ENCODE measurements at regions of chr4 and their contacts with region 1.

Region 1: DNA sequence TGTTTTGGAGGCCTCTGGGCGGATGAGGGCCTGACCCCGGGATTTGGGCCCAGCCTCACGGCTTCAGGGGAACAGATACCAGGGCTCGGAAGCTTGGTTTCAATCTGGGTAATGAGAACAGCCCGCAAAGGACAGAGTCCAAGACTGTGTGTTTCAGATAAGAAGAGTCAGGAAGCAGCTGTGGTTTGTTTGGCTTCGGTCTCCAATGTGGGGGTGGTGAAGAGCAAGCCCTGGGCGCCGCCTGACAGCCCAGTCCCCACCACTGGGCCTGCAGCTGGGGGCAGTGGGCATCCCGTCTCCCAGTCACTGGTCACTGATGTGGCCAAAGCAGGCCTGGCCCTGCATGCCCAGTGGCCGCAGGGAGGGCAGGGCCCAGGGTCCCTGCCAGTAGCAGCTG is 9.1 kb downstream of the WFS1 start:
- DNase-seq: peak in 1 of 9 experiments; percentile 20
- ATAC-seq: no peak
- H3K4me3 ChIP-seq: no peak overlapping the region
- H3K4me3 Mint-ChIP-seq: no peak overlapping the region
- H3K27ac ChIP-seq: no peak overlapping the region
- H3K27ac Mint-ChIP-seq: no peak overlapping the region
- H3K4me1 ChIP-seq: peaks cover 13% of the 10 kb centered on the region
- H3K4me1 Mint-ChIP-seq: peaks cover 9% of the 10 kb centered on the region
- H3K27me3 ChIP-seq: no peaks in the 10 kb centered on the region
- H3K27me3 Mint-ChIP-seq: no peaks in the 10 kb centered on the region
- CTCF ChIP-seq: no peak

Region 2: DNA sequence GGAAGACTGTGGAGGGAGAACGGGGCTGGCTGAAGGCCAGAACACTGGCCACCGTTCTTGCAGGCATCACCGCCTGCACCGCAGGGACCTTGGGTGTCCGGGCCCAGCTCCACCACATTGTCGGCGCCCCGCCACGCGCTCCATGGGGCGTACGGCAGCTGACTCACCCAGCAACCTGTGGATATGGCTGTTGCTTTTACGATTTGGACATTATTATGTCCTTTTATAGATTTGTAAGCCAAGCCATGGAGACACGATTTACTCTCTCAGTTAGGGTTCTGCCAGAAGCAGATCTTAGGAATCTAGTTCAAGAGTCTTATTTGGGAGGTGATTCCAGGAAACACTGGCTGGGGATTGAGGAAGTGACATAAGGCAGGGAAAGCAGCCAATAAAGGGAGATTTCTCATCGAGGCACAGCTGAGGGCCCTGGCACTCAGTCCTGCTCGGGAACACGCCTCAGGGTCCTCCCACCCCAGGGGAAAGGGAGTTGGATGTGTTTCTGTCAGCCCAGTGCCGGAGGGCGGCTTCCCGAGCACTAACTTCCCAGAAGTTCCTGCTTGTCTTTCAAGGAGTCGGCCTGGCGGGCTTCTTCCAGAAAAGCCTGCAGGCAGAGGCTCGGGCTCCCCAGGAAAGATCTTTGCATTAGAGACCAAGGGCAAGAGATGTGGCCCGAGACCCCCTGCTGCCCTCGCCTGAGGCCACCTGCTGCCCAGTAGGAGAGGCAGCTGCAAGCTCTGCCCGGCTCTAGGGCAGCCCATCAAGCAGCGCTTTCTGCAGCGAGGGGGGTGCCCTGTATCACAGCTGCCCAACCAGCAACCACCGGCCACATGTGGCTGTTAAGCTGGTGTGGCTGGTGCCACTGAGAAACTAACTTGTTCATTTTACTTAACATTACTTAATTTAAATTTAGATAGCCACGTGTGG is 438.8 kb before region 1 on chr4:
- CTCF ChIA-PET with region 1: no interaction called
- POLR2A ChIA-PET with region 1: no interaction called
- intact Hi-C with region 1: no loop called
- DNase-seq: no peak
- ATAC-seq: no peak
- H3K4me3 ChIP-seq: no peak overlapping the region
- H3K4me3 Mint-ChIP-seq: no peak overlapping the region
- H3K27ac ChIP-seq: no peak overlapping the region
- H3K27ac Mint-ChIP-seq: no peak overlapping the region
- H3K4me1 ChIP-seq: no peaks in the 10 kb centered on the region
- H3K4me1 Mint-ChIP-seq: no peaks in the 10 kb centered on the region
- H3K27me3 ChIP-seq: no peaks in the 10 kb centered on the region
- H3K27me3 Mint-ChIP-seq: peaks cover 6% of the 10 kb centered on the region
- CTCF ChIP-seq: no peak

Region 3: DNA sequence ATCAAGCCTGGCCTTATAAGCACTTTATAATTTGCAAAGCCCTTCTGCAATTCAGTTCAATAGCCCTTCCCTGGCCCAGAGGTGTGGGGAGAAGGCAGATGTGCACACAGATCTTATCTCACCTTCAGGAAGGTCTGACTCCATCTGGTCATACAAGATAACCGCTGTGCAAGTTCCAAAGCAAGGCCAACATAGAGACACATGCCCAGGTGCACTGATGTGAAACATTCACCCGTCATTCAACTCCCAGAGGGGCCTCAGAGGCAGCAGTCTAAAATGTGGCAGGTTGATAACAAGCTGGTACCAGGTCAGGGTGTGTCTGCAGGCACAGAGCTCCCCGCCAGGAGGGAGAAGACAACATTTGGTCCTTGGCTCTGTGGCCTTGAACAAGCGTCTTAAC is 20.1 kb before region 1 on chr4:
- CTCF ChIA-PET with region 1: interaction called, 3 read pairs
- POLR2A ChIA-PET with region 1: no interaction called
- intact Hi-C with region 1: loop called in 1 of 2 experiments (anchors 2 kb)
- DNase-seq: no peak
- ATAC-seq: no peak
- H3K4me3 ChIP-seq: no peak overlapping the region
- H3K4me3 Mint-ChIP-seq: no peak overlapping the region
- H3K27ac ChIP-seq: no peak overlapping the region
- H3K27ac Mint-ChIP-seq: no peak overlapping the region
- H3K4me1 ChIP-seq: no peaks in the 10 kb centered on the region
- H3K4me1 Mint-ChIP-seq: peaks cover 6% of the 10 kb centered on the region
- H3K27me3 ChIP-seq: no peaks in the 10 kb centered on the region
- H3K27me3 Mint-ChIP-seq: peaks cover 40% of the 10 kb centered on the region
- CTCF ChIP-seq: no peak

Region 4: GRCh38 chr4:6308899-6309643 is 30.3 kb after region 1 on chr4:
- CTCF ChIA-PET with region 1: no interaction called
- POLR2A ChIA-PET with region 1: no interaction called
- intact Hi-C with region 1: no loop called
- DNase-seq: peak in 5 of 9 experiments; percentile 26 to 64 (median 52)
- ATAC-seq: peak; percentile 70
- H3K4me3 ChIP-seq: peak overlapping the region in 1 of 2 experiments; percentile 52
- H3K4me3 Mint-ChIP-seq: peak overlapping the region; percentile 78
- H3K27ac ChIP-seq: no peak overlapping the region
- H3K27ac Mint-ChIP-seq: no peak overlapping the region
- H3K4me1 ChIP-seq: peaks cover 9% of the 10 kb centered on the region
- H3K4me1 Mint-ChIP-seq: peaks cover 6% of the 10 kb centered on the region
- H3K27me3 ChIP-seq: no peaks in the 10 kb centered on the region
- H3K27me3 Mint-ChIP-seq: peaks cover 33% of the 10 kb centered on the region
- CTCF ChIP-seq: no peak